Activated B cell treated with CpG ODN at 0.5 μM for 24 hours (primary cell): ENCODE measurements at regions of chr18 and their contacts with region 1.

Region 1: DNA sequence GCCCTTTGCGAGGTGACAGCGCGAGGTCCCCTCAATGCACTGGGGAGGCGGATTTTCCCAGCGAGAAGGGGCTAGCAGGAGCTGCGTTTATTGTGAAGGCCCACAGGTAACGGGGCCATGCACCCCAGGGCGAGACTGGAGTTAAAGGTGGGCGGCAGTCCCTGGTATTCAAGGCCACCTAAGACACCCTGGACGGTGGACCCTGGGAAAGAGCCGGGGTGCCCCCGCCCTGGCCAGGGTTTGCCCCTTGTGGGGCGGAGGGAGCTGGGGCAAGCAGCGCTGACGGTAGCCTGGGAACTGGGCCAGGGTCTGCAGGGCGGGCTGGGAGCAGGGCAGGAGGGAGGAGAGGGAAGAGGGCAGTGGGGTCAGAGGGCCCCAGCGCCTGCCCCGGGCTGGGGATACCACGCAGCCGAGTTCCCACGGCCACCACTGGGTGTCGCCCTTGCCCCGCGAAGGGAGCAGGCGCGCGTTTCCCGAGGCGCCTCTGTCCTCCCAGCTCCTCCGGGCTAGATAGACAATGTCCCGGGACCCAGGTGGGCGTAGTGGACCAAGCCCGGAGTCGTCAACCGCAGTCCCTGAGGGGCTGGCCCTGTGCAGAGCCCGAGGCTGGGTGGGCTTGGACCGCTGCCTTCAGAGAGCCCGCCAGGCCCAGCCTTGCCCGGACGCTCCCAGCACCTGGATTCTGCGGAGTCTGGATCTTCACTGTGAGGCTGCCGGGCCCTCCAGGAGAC is 80.2 kb downstream of the SMAD4 start:
- DNase-seq: peak; percentile 67
- ATAC-seq: peak; percentile 77
- H3K4me3 Mint-ChIP-seq: no peak overlapping the region
- H3K27ac Mint-ChIP-seq: no peak overlapping the region
- H3K4me1 Mint-ChIP-seq: peaks cover 13% of the 10 kb centered on the region
- H3K27me3 Mint-ChIP-seq: no peaks in the 10 kb centered on the region
- CTCF ChIP-seq: peak; percentile 82

Region 2: DNA sequence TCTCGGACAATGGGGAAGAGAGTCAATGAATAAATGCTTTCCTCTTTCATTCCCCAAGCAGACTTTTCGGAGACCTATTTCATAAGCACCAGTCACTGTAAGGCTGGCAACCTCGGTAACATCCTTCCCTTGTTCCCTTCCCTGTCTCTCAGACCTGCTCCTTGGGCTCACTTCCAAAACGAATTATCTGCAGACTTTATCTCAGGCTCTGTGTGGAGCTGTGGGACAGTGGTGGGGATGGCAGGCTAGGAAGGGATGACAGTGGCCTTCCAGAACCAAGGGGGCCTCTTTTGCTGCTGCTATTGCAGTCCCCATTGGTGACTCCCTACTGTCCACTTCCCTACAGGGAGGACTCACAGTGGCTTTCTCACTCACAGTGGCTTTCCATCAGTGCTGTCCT is 272.9 kb after region 1 on chr18:
- CTCF ChIA-PET with region 1: interaction called, 6 read pairs
- POLR2A ChIA-PET with region 1: no interaction called
- intact Hi-C with region 1: loop called (anchors 1 kb)
- DNase-seq: no peak
- ATAC-seq: no peak
- H3K4me3 Mint-ChIP-seq: no peak overlapping the region
- H3K27ac Mint-ChIP-seq: no peak overlapping the region
- H3K4me1 Mint-ChIP-seq: no peaks in the 10 kb centered on the region
- H3K27me3 Mint-ChIP-seq: peaks cover 2% of the 10 kb centered on the region
- CTCF ChIP-seq: no peak

Region 3: DNA sequence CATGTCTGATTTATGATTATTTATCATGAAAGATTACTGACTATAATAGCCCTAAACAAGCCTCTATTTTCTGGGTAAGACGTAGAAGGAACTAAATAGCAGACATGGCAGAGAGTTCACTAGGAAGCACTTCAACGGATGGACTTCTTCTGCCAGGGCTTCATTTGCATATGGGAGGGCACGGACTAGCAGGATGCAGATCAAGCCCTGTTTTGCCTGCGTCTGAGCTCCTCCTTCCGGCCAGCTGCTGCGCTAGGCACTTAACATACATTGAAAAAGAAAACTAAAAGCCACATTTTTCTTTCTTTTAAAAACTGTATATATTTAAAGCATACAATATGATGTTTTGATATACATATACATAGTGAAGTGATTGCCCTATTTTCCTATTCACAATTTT is 427.2 kb after region 1 on chr18:
- CTCF ChIA-PET with region 1: no interaction called
- POLR2A ChIA-PET with region 1: no interaction called
- intact Hi-C with region 1: loop called (anchors 5 kb)
- DNase-seq: no peak
- ATAC-seq: no peak
- H3K4me3 Mint-ChIP-seq: no peak overlapping the region
- H3K27ac Mint-ChIP-seq: no peak overlapping the region
- H3K4me1 Mint-ChIP-seq: peaks cover 5% of the 10 kb centered on the region
- H3K27me3 Mint-ChIP-seq: peaks cover 7% of the 10 kb centered on the region
- CTCF ChIP-seq: no peak

Region 4: GRCh38 chr18:52694804-52695203 is 1584.6 kb after region 1 on chr18:
- CTCF ChIA-PET with region 1: no interaction called
- POLR2A ChIA-PET with region 1: no interaction called
- intact Hi-C with region 1: loop called (anchors 10 kb)
- DNase-seq: no peak
- ATAC-seq: no peak
- H3K4me3 Mint-ChIP-seq: no peak overlapping the region
- H3K27ac Mint-ChIP-seq: no peak overlapping the region
- H3K4me1 Mint-ChIP-seq: no peaks in the 10 kb centered on the region
- H3K27me3 Mint-ChIP-seq: no peaks in the 10 kb centered on the region
- CTCF ChIP-seq: no peak